ENCODE measurements at regions of chr6 and their contacts with region 1.

Region 1: DNA sequence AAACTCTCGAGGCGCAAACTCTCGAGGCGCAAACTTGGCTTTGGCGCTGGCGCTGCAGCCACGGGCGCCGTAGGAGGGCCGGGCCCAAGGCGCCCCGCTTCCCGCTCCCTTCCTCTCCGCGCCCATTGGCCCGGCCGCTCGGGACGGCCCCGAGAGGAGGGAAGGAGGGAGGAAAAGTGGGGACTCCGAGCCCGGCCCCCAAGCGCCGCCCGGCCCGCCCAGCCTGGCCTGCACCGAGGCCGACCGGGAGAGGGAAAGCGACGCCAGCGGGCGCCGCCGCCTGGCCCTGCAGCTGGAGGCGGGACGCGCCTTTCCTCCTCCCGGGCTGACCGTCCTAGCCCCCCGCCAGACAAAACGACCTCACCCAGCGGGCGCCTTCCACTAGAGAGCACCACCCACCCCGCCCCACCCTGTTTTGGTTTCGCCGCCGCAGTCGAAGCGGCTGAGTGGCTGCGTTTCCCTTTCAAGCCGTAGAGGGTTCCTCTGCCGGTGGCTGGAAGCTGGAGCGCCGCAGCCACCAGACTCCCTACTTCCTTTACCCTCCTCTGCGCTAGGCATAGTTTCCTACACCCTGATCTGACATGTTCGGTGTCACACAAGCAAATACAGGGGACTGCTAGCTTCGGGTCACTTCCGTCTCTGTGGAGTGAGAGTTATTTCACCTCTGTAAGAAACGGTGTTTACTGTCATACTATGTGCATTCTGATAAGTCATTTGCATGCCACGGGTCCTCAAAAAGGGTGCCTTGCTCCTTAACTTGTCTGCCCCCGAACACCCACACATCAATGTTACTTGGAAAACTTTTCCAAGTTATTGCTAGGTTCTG is at the start of gene MBOAT1:
- DNase-seq: peak; percentile 96
- H3K4me3 ChIP-seq: peak within 1 kb of the TSS; percentile 65 to 80 (median 80)
- H3K27ac ChIP-seq: peak within 1 kb of the TSS; percentile 92
- H3K4me1 ChIP-seq: peaks cover 21% of the 10 kb centered on the region
- H3K27me3 ChIP-seq: no peaks in the 10 kb centered on the region
- CTCF ChIP-seq: peak in 1 of 2 donors; percentile 23
- total RNA-seq, gene MBOAT1: 2.3 to 8.2 TPM

Region 2: DNA sequence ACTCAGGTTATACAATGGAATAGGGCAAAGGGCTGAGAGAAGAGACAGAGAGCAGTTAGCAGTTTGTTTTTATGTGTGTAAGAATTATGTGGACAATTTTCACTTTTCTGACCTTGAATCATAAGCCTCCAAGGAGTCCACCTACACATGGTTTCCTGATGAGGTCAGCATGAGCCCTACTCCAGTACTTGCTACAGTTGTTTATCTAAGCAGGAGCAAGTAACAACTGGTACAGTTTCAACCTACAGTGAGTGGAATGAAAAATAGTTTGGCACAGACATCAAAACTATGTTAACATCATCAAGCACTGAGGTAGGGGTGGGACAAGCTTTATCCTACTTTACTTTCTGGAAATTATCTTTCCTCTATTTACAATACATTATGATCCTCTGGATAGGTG is 802.1 kb before region 1 on chr6:
- CTCF ChIA-PET with region 1: no interaction called
- dilution Hi-C with region 1: no loop called
- in situ Hi-C with region 1: no loop called
- intact Hi-C with region 1: loop called (anchors 10 kb)
- DNase-seq: peak; percentile 95
- H3K4me3 ChIP-seq: no peak overlapping the region
- H3K27ac ChIP-seq: peak overlapping the region; percentile 67
- H3K4me1 ChIP-seq: peaks cover 44% of the 10 kb centered on the region
- H3K27me3 ChIP-seq: no peaks in the 10 kb centered on the region
- CTCF ChIP-seq: no peak

Region 3: GRCh38 chr6:20126789-20127653 is 85.6 kb before region 1 on chr6:
- CTCF ChIA-PET with region 1: no interaction called
- dilution Hi-C with region 1: no loop called
- in situ Hi-C with region 1: no loop called
- intact Hi-C with region 1: loop called (anchors 1 kb)
- DNase-seq: peak; percentile 45
- H3K4me3 ChIP-seq: no peak overlapping the region
- H3K27ac ChIP-seq: no peak overlapping the region
- H3K4me1 ChIP-seq: no peaks in the 10 kb centered on the region
- H3K27me3 ChIP-seq: no peaks in the 10 kb centered on the region
- CTCF ChIP-seq: peak; percentile 89 to 95

Region 4: GRCh38 chr6:20534295-20535262 is 322.0 kb after region 1 on chr6 and contains the start of gene CDKAL1:
- CTCF ChIA-PET with region 1: no interaction called
- dilution Hi-C with region 1: no loop called
- in situ Hi-C with region 1: no loop called
- intact Hi-C with region 1: loop called (anchors 10 kb)
- DNase-seq: peak; percentile 88
- H3K4me3 ChIP-seq: peak within 1 kb of the TSS; percentile 57 to 94 (median 67)
- H3K27ac ChIP-seq: peak within 1 kb of the TSS; percentile 88
- H3K4me1 ChIP-seq: peaks cover 10% of the 10 kb centered on the region
- H3K27me3 ChIP-seq: no peaks in the 10 kb centered on the region
- CTCF ChIP-seq: no peak
- total RNA-seq, gene CDKAL1: 12.0 to 15.2 TPM